ENCODE measurements at regions of chr11 and their contacts with region 1.

Region 1: GRCh38 chr11:27296497-27296896 is 66.5 kb downstream of the CCDC34 start:
- DNase-seq: peak in 1 of 2 experiments; percentile 59
- H3K4me3 ChIP-seq: no peak overlapping the region
- H3K4me3 Mint-ChIP-seq: no peak overlapping the region
- H3K27ac Mint-ChIP-seq: no peak overlapping the region
- H3K4me1 ChIP-seq: no peaks in the 10 kb centered on the region
- H3K4me1 Mint-ChIP-seq: peaks cover 12% of the 10 kb centered on the region
- H3K27me3 ChIP-seq: no peaks in the 10 kb centered on the region
- H3K27me3 Mint-ChIP-seq: no peaks in the 10 kb centered on the region
- CTCF ChIP-seq: peak; percentile 61 to 83

Region 2: GRCh38 chr11:27201454-27202236 is 94.9 kb before region 1 on chr11:
- CTCF ChIA-PET with region 1: interaction called, 7 read pairs
- POLR2A ChIA-PET with region 1: no interaction called
- intact Hi-C with region 1: loop called (anchors 1 kb)
- DNase-seq: peak; percentile 89 to 94
- H3K4me3 ChIP-seq: no peak overlapping the region
- H3K4me3 Mint-ChIP-seq: peak overlapping the region; percentile 63
- H3K27ac Mint-ChIP-seq: peak overlapping the region; percentile 87
- H3K4me1 ChIP-seq: peaks cover 42% of the 10 kb centered on the region
- H3K4me1 Mint-ChIP-seq: peaks cover 48% of the 10 kb centered on the region
- H3K27me3 ChIP-seq: no peaks in the 10 kb centered on the region
- H3K27me3 Mint-ChIP-seq: no peaks in the 10 kb centered on the region
- CTCF ChIP-seq: no peak

Region 3: DNA sequence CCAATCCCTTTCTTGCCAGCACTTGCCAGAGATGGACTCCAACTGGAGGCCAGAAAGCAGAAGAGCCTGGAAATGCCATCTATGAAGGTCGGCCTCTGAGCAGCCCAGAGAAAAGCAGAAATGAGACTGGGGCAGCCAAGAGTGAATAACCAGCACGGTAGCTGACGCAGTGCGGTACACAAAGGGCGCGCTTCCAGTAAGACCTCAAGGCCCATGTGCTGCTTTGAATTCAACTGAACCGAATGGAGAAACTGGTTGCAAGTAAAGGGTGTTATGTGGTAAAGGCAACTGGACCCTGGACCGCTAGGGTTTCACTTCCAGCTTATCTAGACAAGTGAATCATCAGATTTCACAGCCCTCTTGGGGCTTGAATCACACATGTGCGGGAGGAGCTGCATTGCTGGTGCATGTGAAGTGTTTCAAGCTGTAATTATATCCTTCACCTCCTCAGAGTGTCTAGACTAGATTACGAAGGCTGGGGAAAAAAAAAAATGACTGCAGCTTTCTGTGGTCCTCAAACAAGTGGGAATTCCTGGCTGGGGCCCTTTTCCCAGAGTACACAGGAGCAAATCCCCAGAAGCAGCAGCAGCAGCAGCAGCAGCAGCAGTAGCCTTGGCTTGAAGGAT is 62.3 kb before region 1 on chr11:
- CTCF ChIA-PET with region 1: interaction called, 7 read pairs
- POLR2A ChIA-PET with region 1: interaction called, 3 read pairs
- intact Hi-C with region 1: loop called (anchors 1 kb)
- DNase-seq: peak; percentile 61 to 75
- H3K4me3 ChIP-seq: no peak overlapping the region
- H3K4me3 Mint-ChIP-seq: peak overlapping the region; percentile 22
- H3K27ac Mint-ChIP-seq: no peak overlapping the region
- H3K4me1 ChIP-seq: peaks cover 38% of the 10 kb centered on the region
- H3K4me1 Mint-ChIP-seq: peaks cover 18% of the 10 kb centered on the region
- H3K27me3 ChIP-seq: no peaks in the 10 kb centered on the region
- H3K27me3 Mint-ChIP-seq: no peaks in the 10 kb centered on the region
- CTCF ChIP-seq: peak in 1 of 2 experiments; percentile 22

Region 4: DNA sequence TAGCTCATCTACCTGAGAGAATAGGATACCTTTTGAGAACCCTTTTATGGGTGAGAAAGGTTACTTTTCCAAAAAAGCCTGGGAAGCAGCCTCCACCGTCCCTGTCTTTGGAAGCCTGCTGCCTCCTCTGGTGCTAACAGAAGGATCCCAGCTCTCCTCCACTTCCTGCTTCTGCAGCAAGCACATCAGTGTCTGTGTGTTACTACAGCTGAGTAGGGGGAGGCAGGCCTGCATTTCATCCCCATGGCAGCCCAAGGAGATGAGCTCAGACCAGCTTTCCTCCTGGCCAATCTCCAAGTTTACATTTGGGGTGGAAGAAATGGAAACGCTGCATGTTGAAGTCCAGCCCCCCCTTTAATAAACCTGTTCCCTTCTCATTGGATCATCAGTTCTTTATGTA is 73.9 kb after region 1 on chr11:
- CTCF ChIA-PET with region 1: no interaction called
- POLR2A ChIA-PET with region 1: no interaction called
- intact Hi-C with region 1: no loop called
- DNase-seq: no peak
- H3K4me3 ChIP-seq: no peak overlapping the region
- H3K4me3 Mint-ChIP-seq: no peak overlapping the region
- H3K27ac Mint-ChIP-seq: no peak overlapping the region
- H3K4me1 ChIP-seq: peaks cover 31% of the 10 kb centered on the region
- H3K4me1 Mint-ChIP-seq: peaks cover 22% of the 10 kb centered on the region
- H3K27me3 ChIP-seq: no peaks in the 10 kb centered on the region
- H3K27me3 Mint-ChIP-seq: no peaks in the 10 kb centered on the region
- CTCF ChIP-seq: no peak

Region 5: DNA sequence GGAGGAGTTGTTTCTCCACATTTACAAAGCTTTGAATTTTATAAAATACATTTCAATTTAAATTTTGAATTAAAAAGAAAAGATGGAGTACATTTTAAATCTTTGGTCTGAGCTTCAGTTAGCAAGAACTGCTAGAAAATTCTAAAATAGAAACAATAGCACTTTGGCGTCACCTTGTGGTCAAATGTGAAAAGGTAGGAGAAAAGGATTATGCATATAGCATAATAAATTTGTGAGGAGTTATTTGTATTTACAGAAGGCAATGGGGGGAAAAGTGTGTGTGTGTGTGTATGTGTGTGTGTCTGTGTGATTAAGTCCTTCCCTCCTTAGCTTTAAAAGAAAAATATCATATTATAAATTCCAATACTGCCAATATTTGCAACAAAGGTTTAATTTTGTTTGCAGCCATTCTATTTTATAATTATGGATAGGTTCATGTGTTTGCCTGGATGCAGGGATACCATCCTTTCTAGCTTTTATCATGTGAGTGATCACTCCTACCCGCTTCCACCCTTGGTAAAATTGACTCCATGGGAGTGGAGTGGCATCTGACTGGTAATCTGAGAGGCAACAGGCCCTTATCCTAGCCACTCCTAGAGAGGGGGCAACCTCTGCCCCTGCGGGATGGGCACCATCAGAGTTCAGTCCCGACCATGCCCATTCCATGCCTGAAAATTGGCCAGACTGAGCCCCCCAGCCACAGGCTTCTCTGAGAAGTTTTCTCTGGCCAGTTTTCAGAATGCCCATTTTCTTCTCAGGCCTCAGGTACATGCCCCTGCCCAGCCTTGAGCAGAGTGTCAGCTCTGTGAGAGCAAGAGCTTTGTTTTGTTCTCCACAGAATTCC is 189.7 kb after region 1 on chr11:
- CTCF ChIA-PET with region 1: interaction called, 35 read pairs
- POLR2A ChIA-PET with region 1: no interaction called
- intact Hi-C with region 1: loop called (anchors 1 kb)
- DNase-seq: peak in 1 of 2 experiments; percentile 67
- H3K4me3 ChIP-seq: no peak overlapping the region
- H3K4me3 Mint-ChIP-seq: no peak overlapping the region
- H3K27ac Mint-ChIP-seq: no peak overlapping the region
- H3K4me1 ChIP-seq: no peaks in the 10 kb centered on the region
- H3K4me1 Mint-ChIP-seq: no peaks in the 10 kb centered on the region
- H3K27me3 ChIP-seq: no peaks in the 10 kb centered on the region
- H3K27me3 Mint-ChIP-seq: no peaks in the 10 kb centered on the region
- CTCF ChIP-seq: peak; percentile 87 to 92

Measured in Caco-2 (cell line).